PC-3 (cell line): ENCODE measurements at regions of chr9 and their contacts with region 1.

Region 1: GRCh38 chr9:14445946-14446345 is 132.0 kb upstream of the NFIB start:
- DNase-seq: no peak
- ATAC-seq: no peak
- H3K4me3 ChIP-seq: no peak overlapping the region
- H3K27ac ChIP-seq: no peak overlapping the region
- H3K4me1 ChIP-seq: no peaks in the 10 kb centered on the region
- H3K27me3 ChIP-seq: no peaks in the 10 kb centered on the region
- CTCF ChIP-seq: no peak

Region 2: DNA sequence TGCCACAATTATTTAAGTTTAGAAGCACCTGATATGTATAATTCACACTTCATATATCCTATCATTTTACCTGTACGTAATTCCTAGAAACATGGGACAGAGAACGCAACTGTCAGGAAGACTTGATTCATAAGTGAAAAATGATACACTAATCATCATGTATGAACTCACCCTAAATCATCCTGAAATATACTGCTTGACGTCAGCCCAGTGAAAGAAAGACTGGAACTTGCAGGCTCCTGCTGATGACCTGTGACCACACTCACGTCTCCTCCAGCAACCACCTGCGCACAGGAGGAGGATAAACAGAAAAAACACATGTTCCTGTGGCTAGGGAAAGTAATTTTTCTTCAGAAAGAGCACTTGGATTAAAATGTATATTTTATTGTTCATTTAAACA is 1336.2 kb before region 1 on chr9:
- CTCF ChIA-PET with region 1: no interaction called
- POLR2A ChIA-PET with region 1: no interaction called
- intact Hi-C with region 1: loop called (anchors 5 kb)
- DNase-seq: peak; percentile 29
- ATAC-seq: no peak
- H3K4me3 ChIP-seq: no peak overlapping the region
- H3K27ac ChIP-seq: no peak overlapping the region
- H3K4me1 ChIP-seq: peaks cover 17% of the 10 kb centered on the region
- H3K27me3 ChIP-seq: no peaks in the 10 kb centered on the region
- CTCF ChIP-seq: no peak

Region 3: DNA sequence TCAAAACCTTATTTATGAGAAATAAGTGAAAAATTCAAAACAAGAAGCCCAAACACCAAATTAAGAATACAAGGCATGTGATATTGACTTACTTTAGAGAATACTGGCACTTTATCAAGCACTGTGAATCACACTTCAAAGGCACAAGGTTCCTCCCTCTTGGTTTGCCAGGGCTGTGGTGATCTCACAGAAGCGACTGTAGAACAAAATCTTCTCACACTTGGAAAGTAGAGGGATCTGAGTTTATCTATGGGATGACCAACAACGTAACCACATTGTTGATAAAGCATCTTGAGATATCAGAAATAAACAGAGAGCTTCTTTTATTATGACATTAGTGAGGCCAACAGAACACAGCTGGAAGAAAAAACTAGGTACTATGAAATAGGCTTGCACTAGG is 427.9 kb before region 1 on chr9:
- CTCF ChIA-PET with region 1: no interaction called
- POLR2A ChIA-PET with region 1: no interaction called
- intact Hi-C with region 1: no loop called
- DNase-seq: peak; percentile 59
- ATAC-seq: peak; percentile 67
- H3K4me3 ChIP-seq: no peak overlapping the region
- H3K27ac ChIP-seq: no peak overlapping the region
- H3K4me1 ChIP-seq: peaks cover 6% of the 10 kb centered on the region; the same call in 1 of the 2 replicates
- H3K27me3 ChIP-seq: no peaks in the 10 kb centered on the region
- CTCF ChIP-seq: no peak

Region 4: DNA sequence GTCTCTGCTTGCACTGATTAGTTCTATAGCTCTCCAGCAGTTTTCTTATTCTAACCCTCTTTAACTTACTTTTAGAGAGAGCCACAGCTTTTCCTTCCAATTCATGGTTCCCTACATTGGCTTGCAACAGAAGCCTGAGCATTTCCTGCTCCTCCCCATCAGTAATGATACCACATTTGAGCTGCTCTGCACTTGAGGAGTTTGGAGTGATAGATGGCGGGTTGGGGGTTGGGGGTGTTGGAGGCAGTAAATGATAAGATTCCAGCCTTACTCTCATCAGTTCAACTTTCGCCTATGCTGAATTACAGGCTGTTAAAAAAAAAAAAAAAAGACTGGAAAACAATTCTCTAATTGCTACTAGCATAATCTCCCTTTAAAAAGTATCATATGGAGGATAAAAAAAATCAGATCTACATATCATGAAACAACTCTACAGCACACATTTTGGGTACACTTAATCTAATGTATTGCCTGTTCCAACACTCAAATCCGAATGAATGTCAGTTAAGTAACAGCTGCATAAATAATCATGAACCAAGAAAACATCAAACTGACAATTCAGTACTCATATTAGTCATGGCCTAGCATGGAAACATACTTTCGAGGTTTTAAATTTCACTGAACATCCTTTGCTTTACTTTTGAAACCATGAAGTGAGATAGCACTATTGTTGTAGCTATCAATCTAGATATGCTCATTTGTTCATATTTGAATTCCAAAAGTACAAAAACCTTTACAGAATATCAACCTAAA is 356.7 kb before region 1 on chr9:
- CTCF ChIA-PET with region 1: no interaction called
- POLR2A ChIA-PET with region 1: no interaction called
- intact Hi-C with region 1: no loop called
- DNase-seq: no peak
- ATAC-seq: no peak
- H3K4me3 ChIP-seq: no peak overlapping the region
- H3K27ac ChIP-seq: no peak overlapping the region
- H3K4me1 ChIP-seq: no peaks in the 10 kb centered on the region
- H3K27me3 ChIP-seq: no peaks in the 10 kb centered on the region
- CTCF ChIP-seq: no peak

Region 5: GRCh38 chr9:14296495-14297113 is 149.3 kb before region 1 on chr9:
- CTCF ChIA-PET with region 1: no interaction called
- POLR2A ChIA-PET with region 1: no interaction called
- intact Hi-C with region 1: no loop called
- DNase-seq: no peak
- ATAC-seq: no peak
- H3K4me3 ChIP-seq: no peak overlapping the region
- H3K27ac ChIP-seq: no peak overlapping the region
- H3K4me1 ChIP-seq: no peaks in the 10 kb centered on the region
- H3K27me3 ChIP-seq: no peaks in the 10 kb centered on the region
- CTCF ChIP-seq: no peak